ENCODE measurements at regions of chr4 and their contacts with region 1.

Region 1: DNA sequence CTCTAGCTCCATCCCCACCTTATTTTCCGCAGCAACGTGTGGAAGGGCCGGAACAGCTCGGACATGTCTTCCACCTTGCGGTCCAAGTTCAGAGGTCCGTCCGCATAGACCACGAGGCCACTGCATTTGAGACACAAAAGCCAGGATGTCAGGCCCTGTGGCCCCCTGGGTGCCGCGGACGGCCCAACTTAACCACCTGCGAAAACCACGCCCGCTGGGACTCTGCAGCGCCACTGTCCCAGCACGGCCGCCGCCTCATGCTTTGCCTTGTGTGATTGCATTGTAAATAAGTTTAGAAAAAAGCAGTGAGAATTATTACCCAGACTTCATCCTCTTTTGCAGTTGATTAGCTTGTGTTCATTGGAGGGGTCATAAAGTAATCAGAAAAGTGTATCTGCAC is 58.2 kb upstream of the MXD4 start:
- DNase-seq: peak in 4 of 9 experiments; percentile 40 to 68 (median 53)
- ATAC-seq: peak; percentile 48
- H3K4me3 ChIP-seq: no peak overlapping the region
- H3K4me3 Mint-ChIP-seq: no peak overlapping the region
- H3K27ac ChIP-seq: no peak overlapping the region
- H3K27ac Mint-ChIP-seq: no peak overlapping the region
- H3K4me1 ChIP-seq: peaks cover 7% of the 10 kb centered on the region
- H3K4me1 Mint-ChIP-seq: peaks cover 9% of the 10 kb centered on the region
- H3K27me3 ChIP-seq: no peaks in the 10 kb centered on the region
- H3K27me3 Mint-ChIP-seq: no peaks in the 10 kb centered on the region
- CTCF ChIP-seq: no peak

Region 2: DNA sequence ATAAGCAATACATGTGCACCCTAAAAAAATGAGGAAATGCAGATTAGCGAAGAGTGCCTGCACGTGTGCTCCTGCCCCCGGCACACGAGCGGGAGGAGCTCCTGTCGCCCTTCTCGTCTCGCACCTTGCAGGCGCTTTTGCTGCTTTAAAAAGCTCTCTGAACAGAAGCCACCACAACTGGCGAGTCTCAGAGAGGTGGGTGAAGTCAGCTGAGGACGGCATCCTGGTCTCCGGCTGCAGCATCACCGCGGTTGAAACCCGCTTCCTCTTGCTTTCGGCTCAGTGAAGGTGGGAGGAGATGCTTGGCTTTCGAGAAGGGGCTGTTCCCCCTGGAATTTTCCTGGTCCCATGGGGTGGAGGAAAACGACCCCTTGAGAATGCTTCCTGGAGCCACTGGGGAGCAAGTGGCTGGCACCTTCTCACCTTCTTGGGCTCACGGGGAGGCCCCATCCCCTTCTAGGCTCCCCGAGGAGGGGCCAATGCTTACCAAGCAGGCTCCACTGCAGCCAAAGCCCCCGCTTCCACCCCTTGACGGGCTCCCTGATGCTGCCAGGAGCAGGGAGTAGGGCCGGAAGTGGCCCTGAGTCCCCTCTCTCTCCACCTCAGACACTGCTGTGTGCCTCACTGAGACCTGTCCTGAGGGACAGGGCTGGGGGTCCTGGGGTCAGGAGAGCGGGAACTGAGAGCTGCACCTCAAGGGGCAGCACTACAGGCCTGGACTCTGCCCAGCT is 29.0 kb before region 1 on chr4:
- CTCF ChIA-PET with region 1: no interaction called
- POLR2A ChIA-PET with region 1: no interaction called
- intact Hi-C with region 1: loop called in 1 of 2 experiments (anchors 5 kb)
- DNase-seq: peak in 8 of 9 experiments; percentile 61 to 96 (median 81)
- ATAC-seq: peak; percentile 88
- H3K4me3 ChIP-seq: peak overlapping the region; percentile 19 to 29
- H3K4me3 Mint-ChIP-seq: peak overlapping the region; percentile 64
- H3K27ac ChIP-seq: peak overlapping the region; percentile 80 to 81
- H3K27ac Mint-ChIP-seq: peak overlapping the region; percentile 98
- H3K4me1 ChIP-seq: peaks cover 72% of the 10 kb centered on the region
- H3K4me1 Mint-ChIP-seq: peaks cover 56% of the 10 kb centered on the region
- H3K27me3 ChIP-seq: no peaks in the 10 kb centered on the region
- H3K27me3 Mint-ChIP-seq: no peaks in the 10 kb centered on the region
- CTCF ChIP-seq: no peak

Region 3: GRCh38 chr4:2296631-2297601 is 23.2 kb before region 1 on chr4:
- CTCF ChIA-PET with region 1: interaction called, 3 read pairs
- POLR2A ChIA-PET with region 1: no interaction called
- intact Hi-C with region 1: loop called (anchors 2 to 5 kb)
- DNase-seq: peak in 5 of 9 experiments; percentile 33 to 66 (median 57)
- ATAC-seq: peak; percentile 68
- H3K4me3 ChIP-seq: peak overlapping the region in 1 of 2 experiments; percentile 27
- H3K4me3 Mint-ChIP-seq: peak overlapping the region; percentile 85
- H3K27ac ChIP-seq: peak overlapping the region in 1 of 2 experiments; percentile 17
- H3K27ac Mint-ChIP-seq: peak overlapping the region; percentile 96
- H3K4me1 ChIP-seq: peaks cover 58% of the 10 kb centered on the region
- H3K4me1 Mint-ChIP-seq: peaks cover 58% of the 10 kb centered on the region
- H3K27me3 ChIP-seq: no peaks in the 10 kb centered on the region
- H3K27me3 Mint-ChIP-seq: no peaks in the 10 kb centered on the region
- CTCF ChIP-seq: no peak

Region 4: DNA sequence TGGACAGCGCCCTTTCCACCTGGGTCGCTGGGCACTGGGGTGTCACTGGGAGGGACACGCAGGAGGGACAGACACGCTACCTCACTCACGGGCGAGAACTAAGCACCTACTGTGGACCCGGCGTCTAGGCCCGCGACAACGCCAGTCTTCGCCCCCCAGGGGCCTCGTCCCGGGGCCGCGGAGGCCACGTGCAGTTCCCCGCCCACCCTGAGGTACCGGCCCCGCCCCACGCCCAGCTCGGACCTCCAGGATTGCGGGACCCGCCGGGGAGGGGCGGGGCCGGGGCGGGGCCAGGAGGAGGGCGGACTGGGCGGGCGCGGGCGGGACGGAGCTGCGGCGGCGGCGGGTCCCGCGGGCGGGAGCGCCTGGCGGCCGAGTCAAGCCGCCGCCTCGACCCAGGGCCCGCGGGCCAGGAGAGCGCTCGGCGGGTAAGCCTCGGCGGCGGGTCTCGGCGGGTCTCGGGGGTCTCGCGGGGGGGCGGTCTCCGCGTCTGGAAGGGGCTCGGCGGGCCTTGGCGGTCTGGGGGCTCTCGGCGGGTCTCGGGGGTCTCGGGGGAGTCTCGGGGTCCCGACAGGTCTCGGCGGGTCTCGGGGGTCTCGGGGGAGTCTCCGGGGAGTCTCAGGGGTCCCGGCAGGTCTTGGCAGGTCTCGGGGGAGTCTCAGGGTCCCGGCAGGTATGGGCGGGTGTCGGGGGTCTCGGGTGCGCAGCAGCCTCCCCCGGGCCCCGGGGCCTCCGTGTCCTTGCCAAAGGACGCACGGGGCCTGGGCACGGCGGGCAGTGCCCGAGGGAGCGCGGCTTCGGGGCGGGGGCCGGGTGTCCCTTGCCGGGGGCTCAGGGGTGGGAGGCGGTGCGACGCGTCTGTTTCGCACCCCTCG is 472.8 kb after region 1 on chr4 and contains the start of gene SH3BP2:
- CTCF ChIA-PET with region 1: no interaction called
- POLR2A ChIA-PET with region 1: no interaction called
- intact Hi-C with region 1: no loop called
- DNase-seq: peak in 6 of 9 experiments; percentile 53 to 80 (median 66)
- ATAC-seq: peak; percentile 66
- H3K4me3 ChIP-seq: peak within 1 kb of the TSS; percentile 44 to 48
- H3K4me3 Mint-ChIP-seq: peak within 1 kb of the TSS; percentile 85
- H3K27ac ChIP-seq: no peak within 1 kb of the TSS
- H3K27ac Mint-ChIP-seq: peak within 1 kb of the TSS; percentile 60
- H3K4me1 ChIP-seq: peaks cover 44% of the 10 kb centered on the region
- H3K4me1 Mint-ChIP-seq: peaks cover 49% of the 10 kb centered on the region
- H3K27me3 ChIP-seq: no peaks in the 10 kb centered on the region
- H3K27me3 Mint-ChIP-seq: no peaks in the 10 kb centered on the region
- CTCF ChIP-seq: no peak
- total RNA-seq, gene SH3BP2: 22.4 to 24.8 TPM

Measured in CD8-positive, alpha-beta T cell (primary cell).